OCI-LY7 (cell line): ENCODE measurements at regions of chr11 and their contacts with region 1.

Region 1: GRCh38 chr11:129331871-129332274 is 43.8 kb upstream of the BARX2 start:
- DNase-seq: peak; percentile 49
- H3K4me3 ChIP-seq: no peak overlapping the region
- H3K27ac ChIP-seq: no peak overlapping the region
- H3K4me1 ChIP-seq: no peaks in the 10 kb centered on the region
- CTCF ChIP-seq: peak; percentile 84

Region 2: DNA sequence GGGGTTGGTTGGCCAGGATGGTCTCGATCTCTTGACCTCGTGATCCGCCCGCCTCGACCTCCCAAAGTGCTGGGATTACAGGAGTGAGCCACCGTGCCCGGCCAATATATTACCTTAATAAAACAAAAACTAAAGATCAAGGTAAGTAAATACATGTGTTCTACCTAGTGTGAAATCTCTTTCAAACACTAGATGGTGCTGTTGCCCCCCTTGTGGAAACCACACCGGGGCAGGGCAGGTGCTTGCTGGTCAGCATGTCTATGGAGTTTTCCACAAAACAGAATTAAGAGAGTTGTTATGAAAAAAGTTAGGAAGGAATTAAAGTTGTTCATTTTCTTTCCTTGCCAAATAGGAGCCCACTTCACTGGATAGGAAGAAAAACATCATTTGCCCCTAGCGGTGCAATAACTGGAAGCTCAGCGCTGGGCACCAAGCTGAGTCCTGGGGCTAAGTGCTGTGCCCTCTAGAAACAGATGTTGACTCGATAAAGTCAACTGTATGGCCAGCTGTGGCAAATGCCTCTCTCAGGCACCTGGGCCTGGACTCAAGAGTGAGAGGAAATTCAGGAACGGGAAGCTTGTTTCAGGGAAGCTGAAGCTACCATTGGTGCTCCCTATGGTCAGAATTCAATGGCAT is 447.1 kb before region 1 on chr11:
- CTCF ChIA-PET with region 1: no interaction called
- POLR2A ChIA-PET with region 1: no interaction called
- intact Hi-C with region 1: loop called (anchors 2 kb)
- DNase-seq: peak; percentile 67
- H3K4me3 ChIP-seq: no peak overlapping the region
- H3K27ac ChIP-seq: no peak overlapping the region
- H3K4me1 ChIP-seq: no peaks in the 10 kb centered on the region
- CTCF ChIP-seq: peak; percentile 90

Region 3: GRCh38 chr11:129117595-129118350 is 214.1 kb before region 1 on chr11:
- CTCF ChIA-PET with region 1: no interaction called
- POLR2A ChIA-PET with region 1: no interaction called
- intact Hi-C with region 1: loop called (anchors 2 kb)
- DNase-seq: peak; percentile 45
- H3K4me3 ChIP-seq: no peak overlapping the region
- H3K27ac ChIP-seq: no peak overlapping the region
- H3K4me1 ChIP-seq: no peaks in the 10 kb centered on the region
- CTCF ChIP-seq: peak; percentile 96